ENCODE measurements at regions of chr21 and their contacts with region 1.

Region 1: GRCh38 chr21:36966066-36966820 is at the start of gene HLCS:
- DNase-seq: peak; percentile 85
- ATAC-seq: peak; percentile 88
- H3K4me3 ChIP-seq: peak within 1 kb of the TSS; percentile 95
- H3K27ac ChIP-seq: peak within 1 kb of the TSS; percentile 71
- H3K4me1 ChIP-seq: peaks cover 20% of the 10 kb centered on the region
- H3K27me3 ChIP-seq: no peaks in the 10 kb centered on the region
- CTCF ChIP-seq: no peak
- total RNA-seq, gene HLCS: 31.7 and 44.1 TPM in 2 replicates

Region 2: DNA sequence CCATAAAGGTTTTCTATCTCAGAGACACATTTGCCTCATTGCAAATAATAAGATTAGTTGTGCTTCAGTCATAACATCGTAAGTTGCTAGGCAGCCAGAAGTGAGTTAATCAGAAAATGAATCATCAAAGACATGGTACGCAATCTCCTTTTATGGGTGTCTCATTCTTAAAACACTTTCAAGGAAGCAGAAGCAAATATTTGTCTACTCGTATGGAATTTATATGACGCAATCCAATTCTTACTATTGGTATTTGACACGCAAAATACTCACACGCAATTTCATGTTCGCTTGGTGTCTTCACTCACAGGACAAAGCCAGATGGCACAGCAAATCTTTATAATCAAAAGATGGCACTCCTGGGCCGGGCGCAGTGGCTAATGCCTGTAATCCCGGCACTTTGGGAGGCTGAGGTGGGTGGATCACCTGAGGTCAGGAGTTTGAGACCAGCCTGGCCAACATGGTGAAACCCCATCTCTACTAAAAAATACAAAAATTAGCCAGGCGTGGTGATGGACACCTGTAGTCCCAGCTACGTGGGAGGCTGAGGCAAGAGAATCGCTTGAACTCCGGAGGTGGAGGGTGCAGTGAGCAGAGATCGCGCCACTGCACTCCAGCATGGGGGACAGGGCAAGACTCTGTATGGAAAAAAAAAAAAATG is 56.2 kb before region 1 on chr21:
- CTCF ChIA-PET with region 1: no interaction called
- POLR2A ChIA-PET with region 1: interaction called, 10 read pairs
- intact Hi-C with region 1: no loop called
- DNase-seq: peak; percentile 99
- ATAC-seq: peak; percentile 82
- H3K4me3 ChIP-seq: no peak overlapping the region
- H3K27ac ChIP-seq: peak overlapping the region; percentile 98
- H3K4me1 ChIP-seq: peaks cover 43% of the 10 kb centered on the region
- H3K27me3 ChIP-seq: no peaks in the 10 kb centered on the region
- CTCF ChIP-seq: no peak

Region 3: DNA sequence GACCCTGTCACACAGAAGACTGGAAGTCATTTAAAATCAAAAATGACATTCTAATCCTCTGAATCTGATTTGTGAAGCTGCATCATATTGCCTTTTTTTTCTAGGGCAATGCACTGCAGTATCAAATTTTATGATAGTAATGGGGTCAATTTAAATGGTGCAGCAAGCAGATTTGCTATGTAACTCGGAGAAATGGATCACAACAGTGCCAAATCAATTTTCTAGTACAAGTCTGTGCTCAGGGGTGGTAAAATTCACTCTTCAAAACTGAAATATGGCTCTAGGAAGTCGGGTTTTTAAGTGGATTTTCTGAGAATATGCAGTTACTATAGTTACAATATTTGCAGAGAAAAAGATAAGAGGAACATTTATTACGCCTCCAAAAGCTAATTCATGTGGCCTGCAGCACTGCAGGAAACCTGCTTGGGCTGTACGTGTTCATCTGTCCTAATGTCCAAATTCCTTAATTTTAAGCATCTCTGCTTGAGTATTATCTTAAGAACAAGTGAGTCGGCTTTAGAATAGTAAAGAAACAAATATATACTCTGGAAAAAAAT is 31.3 kb before region 1 on chr21:
- CTCF ChIA-PET with region 1: no interaction called
- POLR2A ChIA-PET with region 1: no interaction called
- intact Hi-C with region 1: loop called (anchors 1 kb)
- DNase-seq: no peak
- ATAC-seq: no peak
- H3K4me3 ChIP-seq: no peak overlapping the region
- H3K27ac ChIP-seq: no peak overlapping the region
- H3K4me1 ChIP-seq: no peaks in the 10 kb centered on the region; the same call in 1 of the 2 replicates
- H3K27me3 ChIP-seq: no peaks in the 10 kb centered on the region
- CTCF ChIP-seq: no peak

Region 4: DNA sequence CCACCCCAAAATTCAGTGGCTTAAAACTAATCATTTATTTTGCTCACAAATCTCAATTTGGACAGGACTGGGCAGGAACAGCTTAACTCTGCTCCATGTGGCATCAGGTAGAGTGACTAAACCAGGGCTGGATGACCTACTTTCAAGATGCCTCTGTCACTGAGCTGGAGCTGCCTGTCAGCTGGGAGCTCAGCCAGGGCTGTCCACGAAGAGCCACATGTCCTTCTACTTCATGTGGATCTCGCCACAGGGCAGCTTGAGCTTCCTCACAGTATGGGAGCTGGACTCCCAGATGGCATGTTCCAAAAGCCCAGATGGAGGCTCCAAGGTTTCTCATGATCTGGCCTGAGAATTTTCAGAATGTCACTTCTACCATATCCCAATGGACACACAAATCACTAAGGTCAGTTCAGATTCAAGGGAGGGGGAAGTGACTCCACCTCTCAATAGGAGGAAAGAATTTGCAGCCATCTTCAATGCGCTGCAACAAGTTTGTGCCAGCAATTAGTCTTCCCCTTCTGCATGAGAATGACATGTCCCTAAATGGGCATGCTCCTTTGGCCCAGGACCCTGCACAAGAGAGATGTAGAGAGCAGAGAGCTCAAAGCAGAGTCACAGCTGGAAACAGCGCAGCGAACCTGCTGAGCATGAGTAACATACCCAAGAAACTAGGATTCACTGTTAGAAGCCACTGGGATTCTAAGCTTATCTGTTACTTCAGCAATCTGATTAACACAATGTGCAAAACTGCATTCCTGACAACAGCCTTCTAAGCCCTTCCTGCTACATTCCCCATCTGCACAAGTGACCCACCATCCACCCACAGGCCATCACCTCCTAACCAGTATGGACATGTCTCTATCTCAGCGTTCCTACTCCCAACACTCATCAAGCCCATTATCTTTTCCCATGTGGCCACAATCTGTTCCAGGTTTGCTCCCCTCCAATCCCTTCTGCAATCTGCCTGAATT is 16.8 kb before region 1 on chr21:
- CTCF ChIA-PET with region 1: no interaction called
- POLR2A ChIA-PET with region 1: no interaction called
- intact Hi-C with region 1: no loop called
- DNase-seq: no peak
- ATAC-seq: no peak
- H3K4me3 ChIP-seq: no peak overlapping the region
- H3K27ac ChIP-seq: no peak overlapping the region
- H3K4me1 ChIP-seq: no peaks in the 10 kb centered on the region
- H3K27me3 ChIP-seq: no peaks in the 10 kb centered on the region
- CTCF ChIP-seq: no peak

Measured in PC-3 (cell line).